IMR-90 (cell line): ENCODE measurements at regions of chr4 and their contacts with region 1.

Region 1: DNA sequence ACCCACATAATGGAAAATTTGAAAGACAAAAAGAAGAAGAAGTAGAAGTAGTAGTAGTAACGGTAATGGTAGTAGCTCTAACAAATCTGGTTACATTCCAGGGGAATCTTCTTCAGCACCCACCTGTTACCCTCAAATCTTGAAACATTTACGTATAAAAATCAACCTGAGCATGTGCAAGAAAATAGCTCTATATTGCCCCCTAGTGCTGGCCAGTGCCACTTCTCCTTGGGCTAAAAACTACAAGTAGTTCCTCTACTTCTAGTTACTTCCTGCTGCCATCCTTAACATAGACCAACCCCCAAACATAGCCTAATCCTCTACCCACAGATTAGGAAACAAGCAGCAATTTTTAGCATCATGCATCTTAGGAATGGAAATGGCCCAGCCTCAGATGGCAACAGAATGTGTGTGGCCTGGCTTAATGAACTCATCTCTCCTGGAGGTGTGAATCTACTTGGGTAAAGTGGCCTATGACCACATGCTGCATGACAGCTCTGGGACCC is 3.1 kb downstream of the PDGFC start:
- DNase-seq: peak; percentile 85
- ATAC-seq: peak; percentile 48
- H3K4me3 ChIP-seq: peak overlapping the region; percentile 61
- H3K27ac ChIP-seq: peak overlapping the region; percentile 64
- H3K4me1 ChIP-seq: peaks cover 7% of the 10 kb centered on the region
- H3K27me3 ChIP-seq: no peaks in the 10 kb centered on the region
- CTCF ChIP-seq: peak; percentile 88
- POLR2A ChIP-seq: no peak
- RAD21 ChIP-seq: peak; percentile 90

Region 2: GRCh38 chr4:155953151-155954114 is 1015.1 kb before region 1 on chr4 and contains the start of gene CTSO:
- CTCF ChIA-PET with region 1: no interaction called
- POLR2A ChIA-PET with region 1: no interaction called
- dilution Hi-C with region 1: no loop called
- in situ Hi-C with region 1: loop called (anchors 25 kb)
- intact Hi-C with region 1: loop called (anchors 10 kb)
- DNase-seq: peak; percentile 85
- ATAC-seq: peak; percentile 94
- H3K4me3 ChIP-seq: peak within 1 kb of the TSS; percentile 76
- H3K27ac ChIP-seq: peak within 1 kb of the TSS; percentile 99
- H3K4me1 ChIP-seq: peaks cover 8% of the 10 kb centered on the region
- H3K27me3 ChIP-seq: no peaks in the 10 kb centered on the region
- CTCF ChIP-seq: peak; percentile 72
- POLR2A ChIP-seq: peak; percentile 62
- RAD21 ChIP-seq: peak; percentile 70
- total RNA-seq, gene CTSO: 2.9 and 3.6 TPM in 2 replicates

Region 3: GRCh38 chr4:156378033-156378665 is 590.4 kb before region 1 on chr4:
- CTCF ChIA-PET with region 1: no interaction called
- POLR2A ChIA-PET with region 1: no interaction called
- dilution Hi-C with region 1: no loop called
- in situ Hi-C with region 1: no loop called
- intact Hi-C with region 1: loop called (anchors 5 kb)
- DNase-seq: peak; percentile 71
- ATAC-seq: peak; percentile 89
- H3K4me3 ChIP-seq: no peak overlapping the region
- H3K27ac ChIP-seq: no peak overlapping the region
- H3K4me1 ChIP-seq: peaks cover 2% of the 10 kb centered on the region
- H3K27me3 ChIP-seq: no peaks in the 10 kb centered on the region
- CTCF ChIP-seq: peak; percentile 69
- POLR2A ChIP-seq: no peak
- RAD21 ChIP-seq: peak; percentile 67

Region 4: GRCh38 chr4:156615066-156615531 is 353.4 kb before region 1 on chr4:
- CTCF ChIA-PET with region 1: no interaction called
- POLR2A ChIA-PET with region 1: no interaction called
- dilution Hi-C with region 1: no loop called
- in situ Hi-C with region 1: no loop called
- intact Hi-C with region 1: loop called (anchors 5 kb)
- DNase-seq: peak; percentile 92
- ATAC-seq: peak; percentile 98
- H3K4me3 ChIP-seq: no peak overlapping the region
- H3K27ac ChIP-seq: no peak overlapping the region
- H3K4me1 ChIP-seq: peaks cover 2% of the 10 kb centered on the region; the same call in 1 of the 2 replicates
- H3K27me3 ChIP-seq: no peaks in the 10 kb centered on the region
- CTCF ChIP-seq: no peak
- POLR2A ChIP-seq: no peak
- RAD21 ChIP-seq: no peak

Region 5: GRCh38 chr4:156771171-156771837 is 197.2 kb before region 1 on chr4:
- CTCF ChIA-PET with region 1: interaction called, 5 read pairs
- POLR2A ChIA-PET with region 1: no interaction called
- dilution Hi-C with region 1: no loop called
- in situ Hi-C with region 1: loop called (anchors 10 kb)
- intact Hi-C with region 1: no loop called
- DNase-seq: peak; percentile 69
- ATAC-seq: peak; percentile 69
- H3K4me3 ChIP-seq: no peak overlapping the region
- H3K27ac ChIP-seq: peak overlapping the region; percentile 91
- H3K4me1 ChIP-seq: peaks cover 10% of the 10 kb centered on the region
- H3K27me3 ChIP-seq: no peaks in the 10 kb centered on the region
- CTCF ChIP-seq: no peak
- POLR2A ChIP-seq: no peak
- RAD21 ChIP-seq: no peak

Region 6: DNA sequence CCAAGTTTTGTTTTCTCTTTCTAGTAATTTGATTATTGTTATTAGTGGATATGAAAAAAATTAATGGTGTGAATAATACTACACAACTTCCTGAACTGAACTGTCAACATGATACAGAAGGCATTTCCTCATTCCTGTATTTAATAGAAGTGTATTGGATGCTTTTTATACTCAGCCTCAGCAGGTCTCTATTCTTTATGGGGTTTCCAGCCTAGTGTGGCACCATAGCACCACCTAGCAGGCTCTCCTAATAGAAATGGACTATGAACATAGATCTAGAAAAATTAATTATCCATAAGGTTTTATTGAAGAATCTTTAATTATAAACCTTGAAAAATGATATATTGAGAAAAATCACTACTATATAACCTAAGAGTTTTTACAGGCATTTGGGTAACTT is 159.9 kb after region 1 on chr4:
- CTCF ChIA-PET with region 1: no interaction called
- POLR2A ChIA-PET with region 1: no interaction called
- dilution Hi-C with region 1: no loop called
- in situ Hi-C with region 1: no loop called
- intact Hi-C with region 1: loop called (anchors 1 kb)
- DNase-seq: peak; percentile 52
- ATAC-seq: peak; percentile 88
- H3K4me3 ChIP-seq: no peak overlapping the region
- H3K27ac ChIP-seq: no peak overlapping the region
- H3K4me1 ChIP-seq: no peaks in the 10 kb centered on the region
- H3K27me3 ChIP-seq: no peaks in the 10 kb centered on the region
- CTCF ChIP-seq: peak; percentile 67
- POLR2A ChIP-seq: no peak
- RAD21 ChIP-seq: peak; percentile 74

Region 7: DNA sequence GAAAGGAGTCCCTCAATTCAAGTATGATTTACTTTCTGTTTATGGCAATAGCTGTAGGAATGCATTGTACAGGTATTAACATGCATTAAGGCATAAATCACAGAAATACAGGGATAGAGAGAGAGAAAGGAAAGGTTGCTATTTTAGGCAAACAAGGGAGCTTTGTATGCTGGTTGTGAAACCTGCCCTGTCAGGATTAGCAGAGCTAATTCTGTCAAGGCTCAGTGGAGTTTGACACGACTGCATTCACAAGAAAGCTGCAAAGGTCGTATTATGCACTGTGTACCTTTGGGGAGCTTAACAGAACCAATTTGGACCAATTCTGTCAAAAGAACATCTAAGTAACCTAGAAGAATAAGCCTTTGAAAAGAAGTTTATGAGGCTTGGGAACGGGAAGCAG is 491.3 kb after region 1 on chr4:
- CTCF ChIA-PET with region 1: no interaction called
- POLR2A ChIA-PET with region 1: no interaction called
- dilution Hi-C with region 1: no loop called
- in situ Hi-C with region 1: no loop called
- intact Hi-C with region 1: no loop called
- DNase-seq: no peak
- ATAC-seq: no peak
- H3K4me3 ChIP-seq: no peak overlapping the region
- H3K27ac ChIP-seq: no peak overlapping the region
- H3K4me1 ChIP-seq: no peaks in the 10 kb centered on the region
- H3K27me3 ChIP-seq: no peaks in the 10 kb centered on the region
- CTCF ChIP-seq: no peak
- POLR2A ChIP-seq: no peak
- RAD21 ChIP-seq: no peak

Region 8: GRCh38 chr4:157564771-157565170 is 596.2 kb after region 1 on chr4:
- CTCF ChIA-PET with region 1: no interaction called
- POLR2A ChIA-PET with region 1: no interaction called
- dilution Hi-C with region 1: no loop called
- in situ Hi-C with region 1: no loop called
- intact Hi-C with region 1: no loop called
- DNase-seq: no peak
- ATAC-seq: no peak
- H3K4me3 ChIP-seq: no peak overlapping the region
- H3K27ac ChIP-seq: no peak overlapping the region
- H3K4me1 ChIP-seq: no peaks in the 10 kb centered on the region
- H3K27me3 ChIP-seq: no peaks in the 10 kb centered on the region
- CTCF ChIP-seq: no peak
- POLR2A ChIP-seq: no peak
- RAD21 ChIP-seq: no peak

Region 9: GRCh38 chr4:157978680-157979361 is 1010.3 kb after region 1 on chr4:
- CTCF ChIA-PET with region 1: no interaction called
- POLR2A ChIA-PET with region 1: no interaction called
- dilution Hi-C with region 1: no loop called
- in situ Hi-C with region 1: no loop called
- intact Hi-C with region 1: loop called (anchors 2 kb)
- DNase-seq: peak; percentile 64
- ATAC-seq: peak; percentile 95
- H3K4me3 ChIP-seq: no peak overlapping the region; the same call in 1 of the 2 replicates
- H3K27ac ChIP-seq: no peak overlapping the region
- H3K4me1 ChIP-seq: no peaks in the 10 kb centered on the region
- H3K27me3 ChIP-seq: no peaks in the 10 kb centered on the region; the same call in 1 of the 2 replicates
- CTCF ChIP-seq: peak; percentile 78
- POLR2A ChIP-seq: no peak
- RAD21 ChIP-seq: peak; percentile 81